CD4-positive, alpha-beta T cell (primary cell): ENCODE measurements at regions of chr2 and their contacts with region 1.

Region 1: GRCh38 chr2:218852911-218853667 is 6.5 kb upstream of the WNT6 start:
- DNase-seq: peak; percentile 51 to 85 (median 63)
- ATAC-seq: peak; percentile 92
- H3K4me3 ChIP-seq: no peak overlapping the region
- H3K4me3 Mint-ChIP-seq: no peak overlapping the region
- H3K27ac ChIP-seq: no peak overlapping the region
- H3K27ac Mint-ChIP-seq: no peak overlapping the region
- H3K4me1 ChIP-seq: peaks cover 7% of the 10 kb centered on the region
- H3K4me1 Mint-ChIP-seq: no peaks in the 10 kb centered on the region
- H3K27me3 ChIP-seq: peaks cover 45 to 64% of the 10 kb centered on the region in 2 experiments
- H3K27me3 Mint-ChIP-seq: peaks cover 70% of the 10 kb centered on the region
- CTCF ChIP-seq: peak; percentile 74

Region 2: DNA sequence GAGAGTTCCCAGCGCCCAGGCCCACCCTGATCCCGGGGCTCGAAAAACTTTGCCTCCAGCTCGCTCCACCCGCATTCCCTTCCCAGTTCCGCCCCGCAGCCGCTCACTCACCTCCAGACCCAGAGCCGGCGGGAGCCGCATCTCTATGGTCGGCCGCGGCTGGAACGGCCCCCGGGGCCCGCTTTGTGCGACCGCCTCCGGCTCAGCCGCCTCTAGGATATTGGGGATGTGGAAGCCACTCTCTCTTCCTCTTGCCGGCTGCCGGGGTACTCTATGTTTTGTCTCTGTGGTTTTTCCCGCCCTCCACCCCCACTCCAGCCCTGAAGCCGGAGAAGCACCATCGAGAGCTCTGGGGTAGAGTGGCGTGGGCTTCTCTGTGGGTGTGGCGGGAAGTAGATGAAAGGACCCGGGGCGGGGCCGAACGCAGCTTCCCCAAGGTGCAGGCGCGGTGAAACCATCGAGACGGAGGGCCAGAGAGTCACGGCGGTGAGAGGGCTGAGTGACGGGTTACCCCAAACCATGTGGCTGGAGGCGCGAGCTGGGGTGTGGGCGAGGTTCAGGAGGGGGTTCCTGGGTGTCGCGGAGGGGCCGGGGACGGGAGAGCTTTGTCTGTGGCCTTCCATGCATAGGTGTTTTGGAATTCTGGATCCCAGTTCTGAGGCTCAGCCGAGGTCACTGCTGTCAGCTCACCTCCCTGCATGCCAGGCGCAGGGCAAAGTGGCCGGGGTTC is 193.7 kb before region 1 on chr2 and contains the starts of genes BCS1L and ZNF142:
- CTCF ChIA-PET with region 1: interaction called, 19 read pairs
- POLR2A ChIA-PET with region 1: interaction called, 3 read pairs
- intact Hi-C with region 1: loop called in 1 of 2 experiments (anchors 5 kb)
- DNase-seq: peak; percentile 82 to 95 (median 92)
- ATAC-seq: peak; percentile 98
- H3K4me3 ChIP-seq: peak within 1 kb of the TSS; percentile 79
- H3K4me3 Mint-ChIP-seq: peak within 1 kb of the TSS; percentile 95
- H3K27ac ChIP-seq: peak within 1 kb of the TSS; percentile 53 to 83
- H3K27ac Mint-ChIP-seq: peak within 1 kb of the TSS; percentile 89
- H3K4me1 ChIP-seq: peaks cover 19% of the 10 kb centered on the region
- H3K4me1 Mint-ChIP-seq: peaks cover 35% of the 10 kb centered on the region
- H3K27me3 ChIP-seq: no peaks in the 10 kb centered on the region
- H3K27me3 Mint-ChIP-seq: no peaks in the 10 kb centered on the region
- CTCF ChIP-seq: no peak
- total RNA-seq, gene BCS1L: 11.4 to 12.7 TPM
- total RNA-seq, gene ZNF142: 40.3 to 44.2 TPM

Region 3: GRCh38 chr2:218727502-218728165 is 125.5 kb before region 1 on chr2:
- CTCF ChIA-PET with region 1: no interaction called
- POLR2A ChIA-PET with region 1: no interaction called
- intact Hi-C with region 1: no loop called
- DNase-seq: peak in 2 of 14 experiments; percentile 38 to 39
- ATAC-seq: no peak
- H3K4me3 ChIP-seq: no peak overlapping the region
- H3K4me3 Mint-ChIP-seq: no peak overlapping the region
- H3K27ac ChIP-seq: no peak overlapping the region
- H3K27ac Mint-ChIP-seq: no peak overlapping the region
- H3K4me1 ChIP-seq: peaks cover 2% of the 10 kb centered on the region
- H3K4me1 Mint-ChIP-seq: peaks cover 27% of the 10 kb centered on the region
- H3K27me3 ChIP-seq: no peaks in the 10 kb centered on the region
- H3K27me3 Mint-ChIP-seq: no peaks in the 10 kb centered on the region
- CTCF ChIP-seq: no peak

Region 4: DNA sequence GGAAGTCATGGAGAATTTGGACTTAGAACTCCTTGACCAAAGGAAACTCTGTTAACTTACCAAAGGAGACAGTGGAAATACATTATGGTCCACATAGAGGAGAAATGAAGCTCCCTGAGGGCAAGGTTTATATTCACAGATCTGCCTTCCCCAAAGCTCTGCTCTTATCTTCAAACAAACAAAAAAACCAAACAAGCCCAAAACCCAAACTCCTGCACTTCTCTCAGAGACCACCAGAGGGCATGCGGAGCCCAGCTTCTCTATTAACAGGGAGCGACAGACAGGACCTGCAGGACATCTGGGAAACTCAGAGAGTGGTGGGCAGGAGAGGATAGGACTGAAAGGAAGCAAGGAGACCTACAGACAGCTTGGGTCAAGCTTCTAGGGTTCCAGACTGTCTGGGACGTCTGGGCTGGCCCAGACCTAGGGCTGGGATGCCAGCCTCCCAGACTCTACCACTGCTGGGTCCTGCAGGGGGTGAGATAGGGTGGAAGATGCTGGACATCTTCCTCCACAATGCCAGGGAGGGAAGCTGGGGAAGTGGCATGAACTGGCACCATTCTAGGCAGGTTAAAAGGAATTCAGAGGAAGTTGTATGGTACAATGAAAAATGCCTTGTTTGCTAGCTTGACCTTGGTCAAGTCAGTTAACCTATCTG is 23.6 kb after region 1 on chr2:
- CTCF ChIA-PET with region 1: interaction called, 12 read pairs
- POLR2A ChIA-PET with region 1: interaction called, 3 read pairs
- intact Hi-C with region 1: loop called in 1 of 2 experiments (anchors 2 kb)
- DNase-seq: peak; percentile 54 to 87 (median 73)
- ATAC-seq: no peak
- H3K4me3 ChIP-seq: no peak overlapping the region
- H3K4me3 Mint-ChIP-seq: peak overlapping the region; percentile 8
- H3K27ac ChIP-seq: no peak overlapping the region
- H3K27ac Mint-ChIP-seq: peak overlapping the region; percentile 6
- H3K4me1 ChIP-seq: peaks cover 78% of the 10 kb centered on the region
- H3K4me1 Mint-ChIP-seq: peaks cover 54% of the 10 kb centered on the region
- H3K27me3 ChIP-seq: peaks cover 29 to 36% of the 10 kb centered on the region in 2 experiments
- H3K27me3 Mint-ChIP-seq: peaks cover 45% of the 10 kb centered on the region
- CTCF ChIP-seq: peak; percentile 98

Region 5: GRCh38 chr2:219002395-219003266 is 149.5 kb after region 1 on chr2:
- CTCF ChIA-PET with region 1: no interaction called
- POLR2A ChIA-PET with region 1: no interaction called
- intact Hi-C with region 1: loop called in 1 of 2 experiments (anchors 2 kb)
- DNase-seq: peak in 11 of 14 experiments; percentile 22 to 68 (median 41)
- ATAC-seq: peak; percentile 72
- H3K4me3 ChIP-seq: peak overlapping the region; percentile 25
- H3K4me3 Mint-ChIP-seq: peak overlapping the region; percentile 69
- H3K27ac ChIP-seq: no peak overlapping the region
- H3K27ac Mint-ChIP-seq: no peak overlapping the region
- H3K4me1 ChIP-seq: peaks cover 28% of the 10 kb centered on the region
- H3K4me1 Mint-ChIP-seq: peaks cover 12% of the 10 kb centered on the region
- H3K27me3 ChIP-seq: peaks cover 72 to 77% of the 10 kb centered on the region in 2 experiments
- H3K27me3 Mint-ChIP-seq: peaks cover 84% of the 10 kb centered on the region
- CTCF ChIP-seq: no peak

Region 6: DNA sequence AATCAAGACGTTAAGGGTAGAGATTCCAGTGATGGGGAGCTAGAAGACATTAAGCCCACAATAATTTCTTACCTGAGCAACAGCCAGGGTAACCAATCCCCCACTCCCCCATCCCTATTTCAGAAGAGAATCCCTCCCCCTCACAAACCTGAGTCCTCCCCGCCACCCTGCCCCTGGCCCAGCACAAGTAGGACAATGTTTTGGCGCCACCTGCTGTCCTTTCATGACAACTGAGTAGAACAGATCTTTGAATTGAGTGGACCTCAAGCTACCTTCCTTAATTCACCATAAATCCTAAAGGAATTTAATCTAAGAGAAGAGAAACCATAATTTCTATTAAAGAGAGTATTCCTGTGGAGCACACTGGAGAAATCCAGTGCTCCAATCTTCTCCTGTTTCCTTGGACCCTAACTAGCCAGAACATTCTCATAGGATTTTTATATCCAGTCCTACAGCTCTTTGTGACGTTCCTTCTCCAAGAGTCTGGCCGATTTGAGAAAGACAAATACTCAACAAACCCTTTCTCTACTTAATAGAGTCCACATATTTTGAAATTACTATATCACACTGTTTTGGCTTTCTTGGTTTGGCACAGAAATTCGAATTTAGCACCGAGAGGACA is 266.4 kb after region 1 on chr2:
- CTCF ChIA-PET with region 1: no interaction called
- POLR2A ChIA-PET with region 1: no interaction called
- intact Hi-C with region 1: loop called (anchors 5 kb)
- DNase-seq: peak; percentile 29 to 76 (median 46)
- ATAC-seq: no peak
- H3K4me3 ChIP-seq: no peak overlapping the region
- H3K4me3 Mint-ChIP-seq: no peak overlapping the region
- H3K27ac ChIP-seq: no peak overlapping the region
- H3K27ac Mint-ChIP-seq: no peak overlapping the region
- H3K4me1 ChIP-seq: peaks cover under 1% of the 10 kb centered on the region
- H3K4me1 Mint-ChIP-seq: peaks cover 14% of the 10 kb centered on the region
- H3K27me3 ChIP-seq: no peaks in the 10 kb centered on the region
- H3K27me3 Mint-ChIP-seq: no peaks in the 10 kb centered on the region
- CTCF ChIP-seq: peak; percentile 62